IMR-90 (cell line): ENCODE measurements at regions of chr7 and their contacts with region 1.

Region 1: GRCh38 chr7:82615527-82615926 is 171.9 kb upstream of the CACNA2D1 start:
- DNase-seq: no peak
- ATAC-seq: no peak
- H3K4me3 ChIP-seq: no peak overlapping the region
- H3K27ac ChIP-seq: no peak overlapping the region
- H3K4me1 ChIP-seq: no peaks in the 10 kb centered on the region
- H3K27me3 ChIP-seq: no peaks in the 10 kb centered on the region
- CTCF ChIP-seq: no peak
- POLR2A ChIP-seq: no peak
- RAD21 ChIP-seq: no peak

Region 2: DNA sequence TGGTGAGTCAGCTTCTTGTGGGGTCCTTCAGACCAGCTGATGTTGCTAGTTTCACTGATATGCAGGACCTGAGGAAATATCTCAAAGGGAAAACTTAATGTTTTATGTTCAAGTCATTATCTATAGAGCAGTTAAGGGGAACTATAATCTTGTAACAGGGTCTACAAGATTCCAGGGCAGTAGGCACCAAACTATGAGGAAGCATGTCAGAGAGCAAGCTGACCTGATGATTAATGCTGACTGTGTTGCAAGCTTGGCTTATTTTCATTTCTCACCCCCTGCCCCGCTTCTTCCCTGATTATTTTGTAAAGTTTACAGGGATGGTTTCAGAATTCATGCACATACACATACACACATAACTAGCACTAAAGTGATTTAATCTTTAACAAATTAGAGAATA is 87.7 kb before region 1 on chr7:
- CTCF ChIA-PET with region 1: no interaction called
- POLR2A ChIA-PET with region 1: no interaction called
- dilution Hi-C with region 1: no loop called
- in situ Hi-C with region 1: no loop called
- intact Hi-C with region 1: no loop called
- DNase-seq: peak; percentile 30
- ATAC-seq: peak; percentile 24; the same call in 1 of the 2 replicates
- H3K4me3 ChIP-seq: no peak overlapping the region
- H3K27ac ChIP-seq: no peak overlapping the region
- H3K4me1 ChIP-seq: peaks cover 5% of the 10 kb centered on the region; the same call in 1 of the 2 replicates
- H3K27me3 ChIP-seq: no peaks in the 10 kb centered on the region
- CTCF ChIP-seq: no peak
- POLR2A ChIP-seq: no peak
- RAD21 ChIP-seq: no peak

Region 3: DNA sequence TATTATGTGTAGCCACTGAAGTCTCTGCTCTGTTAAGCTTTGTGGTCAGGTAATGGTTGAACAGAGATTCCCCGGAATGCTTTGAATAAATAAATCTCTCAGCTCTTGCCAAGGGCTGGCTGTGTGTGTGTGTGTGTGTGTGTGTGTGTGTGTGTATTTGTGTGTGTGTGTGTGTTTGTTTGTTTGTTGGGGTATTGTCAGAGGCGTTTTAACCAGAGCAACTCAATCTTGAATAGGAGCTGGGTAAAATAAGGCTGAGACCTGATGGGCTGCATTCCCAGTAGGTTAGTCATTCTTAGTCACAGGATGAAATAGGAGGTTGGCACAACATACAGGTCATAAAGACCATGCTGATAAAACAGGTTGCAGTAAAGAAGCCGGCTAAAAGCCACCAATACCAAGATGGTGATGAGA is 84.3 kb after region 1 on chr7:
- CTCF ChIA-PET with region 1: no interaction called
- POLR2A ChIA-PET with region 1: no interaction called
- dilution Hi-C with region 1: no loop called
- in situ Hi-C with region 1: no loop called
- intact Hi-C with region 1: loop called (anchors 5 kb)
- DNase-seq: peak; percentile 54
- ATAC-seq: peak; percentile 35
- H3K4me3 ChIP-seq: no peak overlapping the region
- H3K27ac ChIP-seq: no peak overlapping the region
- H3K4me1 ChIP-seq: peaks cover 2% of the 10 kb centered on the region; the same call in 1 of the 2 replicates
- H3K27me3 ChIP-seq: no peaks in the 10 kb centered on the region
- CTCF ChIP-seq: no peak
- POLR2A ChIP-seq: no peak
- RAD21 ChIP-seq: no peak